Posterior cingulate gyrus (tissue), 11 donors: ENCODE measurements at regions of chr2 and their contacts with region 1.

Region 1: GRCh38 chr2:240369801-240370585 is 65.5 kb upstream of the GPC1 start:
- DNase-seq: peak in 8 of 10 donors; percentile 14 to 91 (median 48)

Region 2: GRCh38 chr2:240348522-240348921 is 21.5 kb before region 1 on chr2:
- intact Hi-C with region 1: loop called (anchors 2 kb)
- DNase-seq: peak in 1 of 10 donors; percentile 25

Region 3: GRCh38 chr2:240595496-240596470 is 225.8 kb after region 1 on chr2:
- intact Hi-C with region 1: no loop called
- DNase-seq: peak in 5 of 10 donors; percentile 14 to 79 (median 75)